Tibial artery (tissue), 4 donors: ENCODE measurements at regions of chr2 and their contacts with region 1.

Region 1: GRCh38 chr2:210072922-210073509 is 70.6 kb downstream of the RPE start:
- DNase-seq: no peak
- H3K4me3 ChIP-seq: no peak overlapping the region
- H3K27ac ChIP-seq: no peak overlapping the region
- H3K4me1 ChIP-seq: peaks cover 0 to 3% (median 0%) of the 10 kb centered on the region in 4 donors
- H3K27me3 ChIP-seq: no peaks in the 10 kb centered on the region
- CTCF ChIP-seq: peak; percentile 51 to 56

Region 2: DNA sequence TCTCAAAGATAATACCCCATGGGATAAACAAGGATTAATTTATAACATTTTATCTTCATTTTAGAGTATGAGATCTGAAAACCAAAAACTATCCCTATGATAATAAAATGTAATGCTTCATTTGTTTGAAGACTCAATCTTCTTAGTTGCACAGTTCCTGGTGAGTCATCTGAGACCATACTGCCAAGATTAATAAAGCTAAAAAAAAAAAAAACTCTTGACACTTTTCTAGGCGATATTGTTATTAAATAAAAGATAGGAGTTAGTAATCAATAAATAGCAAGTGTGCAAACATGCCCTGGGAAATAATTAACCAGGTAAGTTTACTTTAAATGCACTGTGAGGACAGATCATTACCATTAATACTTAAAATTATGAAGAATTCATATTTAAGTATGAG is 13.3 kb after region 1 on chr2:
- intact Hi-C with region 1: no loop called
- DNase-seq: no peak
- H3K4me3 ChIP-seq: no peak overlapping the region
- H3K27ac ChIP-seq: no peak overlapping the region
- H3K4me1 ChIP-seq: no peaks in the 10 kb centered on the region
- H3K27me3 ChIP-seq: no peaks in the 10 kb centered on the region
- CTCF ChIP-seq: no peak

Region 3: GRCh38 chr2:210195101-210195852 is 122.3 kb after region 1 on chr2:
- intact Hi-C with region 1: loop called (anchors 5 kb)
- DNase-seq: no peak
- H3K4me3 ChIP-seq: no peak overlapping the region
- H3K27ac ChIP-seq: no peak overlapping the region
- H3K4me1 ChIP-seq: peaks cover 0 to 3% (median 0%) of the 10 kb centered on the region in 4 donors
- H3K27me3 ChIP-seq: no peaks in the 10 kb centered on the region
- CTCF ChIP-seq: peak; percentile 55 to 56